A549 (cell line): ENCODE measurements at regions of chr1 and their contacts with region 1.

Region 1: DNA sequence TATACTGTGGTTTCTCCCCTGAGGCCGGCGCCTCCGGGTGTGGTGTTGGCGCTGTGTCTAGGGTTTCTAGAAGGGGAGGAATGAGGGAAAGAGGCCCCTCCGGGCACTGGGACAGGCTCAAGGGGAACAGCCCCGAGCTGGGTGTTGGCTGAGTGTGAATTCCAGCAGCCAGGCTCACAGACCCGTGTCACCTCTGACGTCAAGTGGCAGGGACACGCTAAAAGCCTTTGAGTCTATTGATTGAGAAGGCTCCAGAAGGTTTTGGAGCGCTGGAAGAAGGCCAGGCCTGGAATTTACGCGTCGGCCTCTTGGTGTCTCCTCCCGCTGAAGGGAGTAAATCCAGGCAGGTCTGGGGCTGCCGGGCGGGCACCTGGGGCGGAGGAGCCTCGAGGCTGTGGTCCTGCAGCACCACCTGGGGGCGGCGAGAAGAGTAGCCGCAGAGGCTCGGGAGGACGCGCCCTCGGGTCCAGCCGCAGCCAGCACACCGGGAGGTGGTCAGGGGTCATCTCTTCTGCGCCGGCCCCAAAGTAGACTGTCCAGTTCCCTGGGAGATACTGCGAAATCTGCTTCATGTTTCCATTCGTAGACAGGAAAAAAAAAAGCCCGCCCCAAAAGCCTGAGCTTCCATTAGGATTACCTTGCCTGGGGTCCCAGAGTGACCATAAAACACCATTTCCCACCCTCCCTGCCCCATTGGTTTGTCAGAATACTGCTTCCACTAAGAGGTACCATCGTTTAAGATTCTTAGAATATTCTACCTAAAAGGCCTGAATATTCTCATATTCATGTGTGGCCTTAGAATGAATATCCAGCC is 61.7 kb downstream of the TLR5 start:
- DNase-seq: peak; percentile 76 to 97
- ATAC-seq: peak; percentile 97 to 98
- H3K4me3 ChIP-seq: peak overlapping the region; percentile 34
- H3K27ac ChIP-seq: peak overlapping the region; percentile 70 to 72
- H3K4me1 ChIP-seq: no peaks in the 10 kb centered on the region
- CTCF ChIP-seq: peak; percentile 95
- EP300 ChIP-seq: no peak
- POLR2A ChIP-seq: no peak
- RAD21 ChIP-seq: peak; percentile 96 to 99

Region 2: DNA sequence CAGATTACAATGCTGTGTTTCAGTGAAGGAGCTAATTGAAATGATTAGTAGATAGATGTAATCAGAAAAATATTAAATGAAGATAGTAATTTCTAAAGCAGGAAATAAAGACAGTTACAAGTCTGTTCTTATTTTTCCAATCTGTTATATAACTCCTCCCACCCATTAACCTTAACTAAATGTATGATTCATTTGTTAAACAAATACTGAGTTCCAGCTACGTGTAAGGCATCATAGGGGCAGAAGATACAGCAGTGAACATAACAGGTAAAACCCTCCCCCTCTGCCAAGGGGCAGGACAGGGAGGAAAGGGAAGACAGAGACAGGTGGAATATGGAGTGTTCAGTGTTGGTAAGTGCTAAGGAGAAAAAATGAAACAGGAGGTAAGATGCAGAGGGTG is 344.4 kb before region 1 on chr1 and contains the start of gene FAM177B:
- CTCF ChIA-PET with region 1: interaction called, 22 read pairs
- POLR2A ChIA-PET with region 1: no interaction called
- DNase-seq: no peak
- ATAC-seq: peak in 1 of 2 experiments; percentile 25; a peak in 1 of 6 replicates
- H3K4me3 ChIP-seq: no peak within 1 kb of the TSS
- H3K27ac ChIP-seq: no peak within 1 kb of the TSS
- H3K4me1 ChIP-seq: peaks cover 9% of the 10 kb centered on the region; the same call in 2 of the 3 replicates
- CTCF ChIP-seq: no peak
- EP300 ChIP-seq: no peak
- POLR2A ChIP-seq: no peak
- RAD21 ChIP-seq: no peak
- polyA plus RNA-seq, gene FAM177B: not detected in 2 replicates

Region 3: DNA sequence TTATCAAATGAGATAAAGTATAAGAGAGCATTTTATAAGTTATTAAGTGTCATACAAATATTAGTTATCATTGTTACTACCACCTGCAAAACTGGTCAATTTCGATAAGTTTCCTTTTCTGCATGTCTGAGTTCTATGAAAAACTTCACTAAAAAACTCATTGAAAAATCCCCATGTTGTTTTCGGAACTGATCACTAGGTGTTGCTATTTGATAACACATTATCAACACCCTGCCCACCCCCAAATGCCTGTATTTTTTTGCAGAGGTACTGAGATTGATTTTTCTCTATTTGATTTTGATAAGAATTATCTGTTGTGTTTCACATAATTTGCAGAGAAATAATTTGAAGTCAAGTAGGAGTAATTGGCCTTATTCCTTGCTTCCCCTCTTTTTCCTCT is 288.6 kb before region 1 on chr1:
- CTCF ChIA-PET with region 1: interaction called, 84 read pairs
- POLR2A ChIA-PET with region 1: no interaction called
- DNase-seq: peak; percentile 19 to 45
- ATAC-seq: peak in 1 of 2 experiments; percentile 54; a peak in 2 of 6 replicates
- H3K4me3 ChIP-seq: no peak overlapping the region
- H3K27ac ChIP-seq: no peak overlapping the region
- H3K4me1 ChIP-seq: 0 out of 3 replicates have a peak, but pooled peaks cover under 1% of the 10 kb centered on the region
- CTCF ChIP-seq: peak; percentile 90
- EP300 ChIP-seq: no peak
- POLR2A ChIP-seq: no peak
- RAD21 ChIP-seq: peak; percentile 84 to 94

Region 4: DNA sequence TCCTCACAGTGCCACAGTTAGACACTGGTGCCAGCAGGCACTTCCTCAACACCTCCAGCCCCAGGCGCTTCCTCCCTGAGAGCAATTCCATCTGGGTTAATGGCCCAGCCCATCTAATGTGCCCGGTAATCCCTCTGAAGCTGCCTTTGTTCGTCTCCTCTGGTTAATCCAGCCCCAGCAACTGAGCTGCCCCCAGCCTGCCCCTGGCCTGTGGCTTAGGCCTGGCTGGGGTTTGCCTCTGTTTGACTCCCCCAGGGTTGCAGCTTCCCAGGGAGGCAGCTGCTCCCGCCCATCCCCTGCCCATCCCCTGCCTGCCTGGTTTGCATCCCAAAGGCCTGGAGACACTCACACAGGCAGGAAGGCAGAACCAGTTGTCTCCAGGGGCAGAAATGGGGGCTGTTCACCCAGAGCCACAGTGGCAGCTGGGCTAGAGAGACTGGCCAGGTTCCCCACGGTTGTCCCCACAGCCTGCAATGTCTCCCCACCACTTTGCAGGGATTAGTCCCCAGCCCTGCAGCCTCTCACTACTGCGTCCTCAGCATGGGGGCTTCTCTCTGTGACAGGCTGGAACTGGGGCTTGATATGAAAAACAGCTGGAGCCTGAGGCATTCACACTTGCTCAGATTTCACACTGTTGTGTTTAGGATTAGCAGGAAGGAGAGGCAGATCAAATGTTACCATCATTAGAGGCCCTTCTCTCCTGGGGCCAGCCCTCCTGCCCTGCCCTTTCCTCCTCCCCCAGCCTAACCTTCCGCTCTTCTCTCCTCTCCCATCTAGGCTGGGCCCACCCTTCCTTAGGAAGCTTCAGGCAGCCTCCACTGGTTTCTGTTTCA is 58.5 kb before region 1 on chr1:
- CTCF ChIA-PET with region 1: no interaction called
- POLR2A ChIA-PET with region 1: no interaction called
- DNase-seq: no peak
- ATAC-seq: peak; percentile 27 to 45; a peak in 3 of 6 replicates
- H3K4me3 ChIP-seq: no peak overlapping the region
- H3K27ac ChIP-seq: 0 out of 6 replicates have a peak overlapping the region, but pooled peaks of 1 of the 2 experiments have one; percentile 11
- H3K4me1 ChIP-seq: 0 out of 3 replicates have a peak, but pooled peaks cover 4% of the 10 kb centered on the region
- CTCF ChIP-seq: no peak
- EP300 ChIP-seq: no peak
- POLR2A ChIP-seq: no peak
- RAD21 ChIP-seq: no peak

Region 5: DNA sequence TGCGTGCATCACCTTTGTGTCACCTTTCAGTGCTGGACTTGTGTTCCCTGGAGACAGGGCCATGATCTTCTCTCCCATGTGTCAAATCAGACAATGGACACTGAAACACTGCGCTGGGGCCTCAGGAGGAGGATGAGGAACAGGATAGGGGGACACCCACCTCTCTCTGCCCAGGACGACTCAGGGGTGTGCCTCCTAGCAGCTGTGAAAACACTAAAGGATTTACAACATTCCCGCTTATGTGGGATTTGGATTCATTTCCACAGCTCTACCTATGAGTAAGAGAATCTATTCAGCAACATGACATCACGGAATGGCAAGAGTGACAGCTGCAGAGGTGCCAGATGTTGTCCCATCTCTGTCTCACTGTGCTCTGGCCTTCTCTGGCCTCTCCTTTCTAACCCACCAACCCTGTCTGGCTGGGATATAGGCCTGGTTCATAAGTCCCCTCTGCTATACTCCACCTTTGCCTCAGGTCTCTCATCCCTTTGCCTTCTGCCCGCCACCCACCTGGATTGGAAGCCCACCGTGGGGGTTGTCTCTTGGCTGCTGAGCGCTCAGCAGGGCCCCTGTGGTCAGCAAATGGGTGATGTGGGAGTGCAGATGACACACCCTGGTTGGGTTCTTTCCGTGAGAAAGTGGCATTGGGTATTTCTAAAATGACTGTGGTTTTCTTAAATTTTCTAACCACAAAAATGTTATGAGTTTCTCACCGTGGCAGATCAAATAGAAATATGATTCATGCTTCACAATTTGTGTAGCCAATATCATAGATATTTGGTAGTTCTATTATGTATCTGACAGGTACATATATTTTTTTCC is 108.7 kb after region 1 on chr1:
- CTCF ChIA-PET with region 1: no interaction called
- POLR2A ChIA-PET with region 1: no interaction called
- DNase-seq: peak in 1 of 2 experiments; percentile 13
- ATAC-seq: peak; percentile 32 to 40; a peak in 1 of 6 replicates
- H3K4me3 ChIP-seq: no peak overlapping the region
- H3K27ac ChIP-seq: no peak overlapping the region
- H3K4me1 ChIP-seq: 0 out of 3 replicates have a peak, but pooled peaks cover 3% of the 10 kb centered on the region
- CTCF ChIP-seq: no peak
- EP300 ChIP-seq: no peak
- POLR2A ChIP-seq: no peak
- RAD21 ChIP-seq: no peak